AG04449 (cell line): ENCODE measurements at regions of chr1 and their contacts with region 1.

Region 1: GRCh38 chr1:21255278-21255942 is 34.9 kb downstream of the ECE1 start:
- DNase-seq: no peak
- H3K4me3 ChIP-seq: no peak overlapping the region
- CTCF ChIP-seq: peak; percentile 91

Region 2: GRCh38 chr1:20830378-20830777 is 425.0 kb before region 1 on chr1:
- CTCF ChIA-PET with region 1: no interaction called
- POLR2A ChIA-PET with region 1: no interaction called
- DNase-seq: no peak
- H3K4me3 ChIP-seq: no peak overlapping the region
- CTCF ChIP-seq: no peak

Region 3: DNA sequence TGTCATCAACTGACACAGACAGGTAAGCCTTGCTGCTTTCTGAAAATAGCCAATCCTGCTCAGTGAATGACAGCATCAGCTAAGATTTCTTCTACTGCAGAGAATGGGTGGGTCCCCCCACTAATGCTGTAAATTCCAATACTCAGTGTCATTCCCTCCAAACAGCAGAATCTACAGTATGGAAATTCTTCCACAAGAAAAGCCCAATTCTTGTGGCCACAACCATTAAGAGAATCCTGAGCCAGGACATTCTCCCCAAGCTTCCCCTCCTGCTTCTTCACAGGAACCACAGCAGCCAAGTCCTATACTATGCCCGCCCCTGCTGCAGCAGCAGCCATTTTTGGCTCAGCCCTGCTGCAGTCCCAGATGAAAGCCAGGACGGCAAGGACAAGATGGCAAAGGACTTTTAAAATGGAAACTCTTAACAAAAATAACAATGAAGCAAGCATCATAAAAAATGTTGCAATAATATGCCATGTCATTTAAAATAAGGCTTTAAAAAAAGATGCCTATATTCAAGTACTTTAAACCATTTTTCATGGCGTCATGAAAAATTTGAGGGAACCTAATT is 105.5 kb before region 1 on chr1:
- CTCF ChIA-PET with region 1: no interaction called
- POLR2A ChIA-PET with region 1: no interaction called
- DNase-seq: peak; percentile 94
- H3K4me3 ChIP-seq: no peak overlapping the region
- CTCF ChIP-seq: no peak

Region 4: GRCh38 chr1:21232044-21232443 is 23.4 kb before region 1 on chr1:
- CTCF ChIA-PET with region 1: interaction called, 191 read pairs
- POLR2A ChIA-PET with region 1: no interaction called
- DNase-seq: no peak
- H3K4me3 ChIP-seq: no peak overlapping the region
- CTCF ChIP-seq: peak; percentile 55

Region 5: DNA sequence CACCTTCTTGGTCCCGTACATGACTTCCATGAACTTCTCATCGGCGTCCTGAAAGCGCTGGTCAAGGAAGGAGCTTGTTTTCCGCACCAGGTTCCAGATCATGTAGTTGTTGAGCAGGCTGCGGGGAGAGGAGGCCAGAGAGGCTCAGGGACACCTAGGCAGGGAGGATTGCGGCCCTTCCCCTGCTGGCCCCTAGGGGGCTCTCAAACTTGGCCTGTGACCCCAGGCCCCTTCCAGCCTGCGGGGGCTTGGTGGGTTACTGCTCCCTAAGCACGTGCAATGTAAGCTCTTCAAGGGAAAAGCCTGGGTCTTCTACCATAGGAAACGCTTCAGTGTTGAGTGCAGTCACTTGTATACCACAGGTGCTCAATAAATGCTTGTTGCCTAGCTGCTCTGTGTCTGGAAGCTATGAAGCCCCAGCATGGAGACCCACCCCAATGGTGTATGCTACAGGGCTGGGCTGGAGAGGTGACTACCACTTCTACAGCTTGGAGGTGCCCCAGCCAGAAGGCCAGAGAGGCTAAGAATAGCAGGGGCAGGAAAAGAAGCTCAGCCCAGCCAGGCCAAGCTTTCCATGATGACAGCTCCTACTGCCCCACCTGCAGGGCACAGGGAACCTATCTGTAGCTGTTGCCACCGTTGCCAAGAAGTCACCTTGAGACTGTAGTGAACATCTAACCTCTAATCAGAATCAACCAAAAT is 10.3 kb before region 1 on chr1:
- CTCF ChIA-PET with region 1: interaction called, 72 read pairs
- POLR2A ChIA-PET with region 1: no interaction called
- DNase-seq: no peak
- H3K4me3 ChIP-seq: no peak overlapping the region
- CTCF ChIP-seq: peak; percentile 28

Region 6: DNA sequence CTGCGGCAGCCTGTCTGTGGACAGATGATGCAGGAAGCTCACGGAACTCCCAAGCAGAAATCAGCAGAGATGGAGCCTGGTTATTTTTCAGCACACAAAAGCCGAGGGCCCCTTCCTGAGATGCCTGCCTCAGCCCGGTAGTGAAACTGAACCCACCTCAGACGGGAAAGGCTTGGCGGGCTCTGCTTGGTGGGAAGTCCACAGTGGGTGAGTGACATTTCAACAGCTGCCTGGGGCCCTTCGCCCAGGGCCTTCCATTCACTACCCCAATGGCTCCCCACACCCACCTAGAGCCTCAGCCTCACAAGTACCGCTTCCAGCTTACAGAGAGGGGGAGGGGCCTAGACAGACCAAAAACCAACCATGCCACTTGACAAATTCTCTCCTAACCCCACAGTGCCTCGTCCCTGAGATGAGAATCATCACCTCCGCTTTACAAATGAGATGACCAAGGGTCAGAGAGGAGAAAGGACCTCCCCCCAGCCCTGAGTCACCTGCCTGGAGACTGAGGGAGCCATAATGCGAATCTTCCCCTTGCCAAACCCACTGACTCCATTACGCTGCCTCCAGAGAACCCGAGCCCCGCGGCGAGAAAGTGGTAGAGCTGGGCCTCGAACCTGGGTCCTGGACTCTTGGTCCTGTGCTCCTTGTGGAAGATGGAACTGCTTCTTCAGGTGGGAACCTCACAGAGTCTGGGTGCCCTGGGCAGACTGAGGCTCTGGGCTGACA is 38.3 kb after region 1 on chr1:
- CTCF ChIA-PET with region 1: interaction called, 10 read pairs
- POLR2A ChIA-PET with region 1: no interaction called
- DNase-seq: no peak
- H3K4me3 ChIP-seq: no peak overlapping the region
- CTCF ChIP-seq: no peak

Region 7: GRCh38 chr1:21324368-21325141 is 69.1 kb after region 1 on chr1:
- CTCF ChIA-PET with region 1: interaction called, 22 read pairs
- POLR2A ChIA-PET with region 1: interaction called, 3 read pairs
- DNase-seq: no peak
- H3K4me3 ChIP-seq: peak overlapping the region; percentile 20
- CTCF ChIP-seq: no peak

Region 8: DNA sequence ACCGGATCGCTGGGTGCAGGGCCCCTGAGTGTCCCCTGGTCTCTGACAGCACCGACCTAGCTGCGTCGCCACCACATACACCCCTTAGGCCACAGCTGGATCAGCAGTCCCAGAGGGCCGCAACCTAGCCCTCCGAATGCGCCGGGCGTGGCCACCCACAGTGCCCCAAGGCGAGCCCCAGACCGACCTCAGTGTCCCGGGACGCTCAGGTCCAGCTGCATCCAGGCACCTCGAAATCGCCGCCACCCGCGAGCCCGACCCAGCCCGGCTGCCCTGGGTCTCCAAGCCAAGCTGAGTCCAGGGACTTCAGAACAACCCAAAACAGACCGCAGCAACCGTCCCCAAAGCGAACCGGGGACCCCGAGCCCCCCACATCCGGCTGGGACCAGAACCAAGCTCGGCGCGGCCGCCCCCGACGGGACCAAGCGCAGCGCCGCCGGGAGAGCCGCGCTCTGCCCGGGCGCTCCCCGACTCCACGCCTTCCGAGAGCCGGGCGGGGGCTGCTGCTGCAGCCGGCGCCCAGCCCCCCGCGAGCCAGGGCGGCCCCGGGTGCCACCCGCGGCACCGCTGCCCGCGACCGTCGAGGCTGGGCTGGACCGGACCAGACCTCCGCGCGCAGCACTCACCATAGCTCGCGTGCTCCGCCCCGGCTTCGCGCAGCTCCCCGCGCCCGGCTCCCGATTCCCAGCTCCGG is 89.5 kb after region 1 on chr1:
- CTCF ChIA-PET with region 1: interaction called, 163 read pairs
- POLR2A ChIA-PET with region 1: interaction called, 3 read pairs
- DNase-seq: no peak
- H3K4me3 ChIP-seq: peak overlapping the region; percentile 84
- CTCF ChIP-seq: no peak

Region 9: GRCh38 chr1:21355956-21356355 is 100.5 kb after region 1 on chr1:
- CTCF ChIA-PET with region 1: interaction called, 14 read pairs
- POLR2A ChIA-PET with region 1: no interaction called
- DNase-seq: no peak
- H3K4me3 ChIP-seq: no peak overlapping the region
- CTCF ChIP-seq: no peak